ENCODE measurements at regions of chr1 and their contacts with region 1.

Region 1: DNA sequence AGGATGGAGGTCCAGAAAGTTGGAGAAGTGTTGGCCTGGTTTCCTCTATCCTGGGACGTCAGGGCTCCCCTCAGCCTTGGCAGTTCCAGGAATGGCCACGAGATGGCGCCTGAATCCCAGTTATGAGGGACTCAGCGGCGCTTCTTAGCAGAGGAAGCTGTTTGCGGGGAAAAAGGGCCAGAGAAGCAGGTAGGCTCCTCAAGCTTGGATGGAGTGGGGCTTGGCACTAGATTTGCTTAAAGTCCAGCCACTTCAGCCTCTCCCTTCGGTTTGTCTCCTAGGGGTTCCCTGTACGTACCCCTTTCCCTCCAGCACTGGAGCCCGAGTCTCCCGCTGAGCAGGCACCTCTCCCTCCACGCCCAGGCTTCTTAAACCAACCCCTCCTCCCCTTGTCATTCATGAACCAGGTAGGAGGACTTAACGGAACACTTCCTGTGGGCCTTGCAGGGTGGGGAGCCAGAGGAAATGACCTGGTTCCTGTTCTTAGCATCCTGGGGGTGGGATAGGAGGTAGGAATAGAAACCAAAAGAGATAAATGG is 32.0 kb upstream of the TENT5B start:
- DNase-seq: peak; percentile 94
- H3K4me3 ChIP-seq: no peak overlapping the region
- H3K27ac ChIP-seq: no peak overlapping the region
- H3K4me1 ChIP-seq: no peaks in the 10 kb centered on the region
- H3K27me3 ChIP-seq: no peaks in the 10 kb centered on the region
- CTCF ChIP-seq: peak; percentile 97

Region 2: GRCh38 chr1:26864610-26865527 is 179.8 kb before region 1 on chr1:
- intact Hi-C with region 1: no loop called
- DNase-seq: peak; percentile 97
- H3K4me3 ChIP-seq: peak overlapping the region; percentile 64
- H3K27ac ChIP-seq: peak overlapping the region; percentile 100
- H3K4me1 ChIP-seq: no peaks in the 10 kb centered on the region
- H3K27me3 ChIP-seq: no peaks in the 10 kb centered on the region
- CTCF ChIP-seq: no peak

Region 3: GRCh38 chr1:26986658-26987057 is 58.0 kb before region 1 on chr1:
- intact Hi-C with region 1: no loop called
- DNase-seq: no peak
- H3K4me3 ChIP-seq: no peak overlapping the region
- H3K27ac ChIP-seq: no peak overlapping the region
- H3K4me1 ChIP-seq: no peaks in the 10 kb centered on the region
- H3K27me3 ChIP-seq: peaks cover 3% of the 10 kb centered on the region
- CTCF ChIP-seq: no peak

Region 4: GRCh38 chr1:27097484-27097917 is 52.8 kb after region 1 on chr1:
- intact Hi-C with region 1: loop called (anchors 2 kb)
- DNase-seq: peak; percentile 84
- H3K4me3 ChIP-seq: no peak overlapping the region
- H3K27ac ChIP-seq: no peak overlapping the region
- H3K4me1 ChIP-seq: no peaks in the 10 kb centered on the region
- H3K27me3 ChIP-seq: no peaks in the 10 kb centered on the region
- CTCF ChIP-seq: peak; percentile 98

Region 5: DNA sequence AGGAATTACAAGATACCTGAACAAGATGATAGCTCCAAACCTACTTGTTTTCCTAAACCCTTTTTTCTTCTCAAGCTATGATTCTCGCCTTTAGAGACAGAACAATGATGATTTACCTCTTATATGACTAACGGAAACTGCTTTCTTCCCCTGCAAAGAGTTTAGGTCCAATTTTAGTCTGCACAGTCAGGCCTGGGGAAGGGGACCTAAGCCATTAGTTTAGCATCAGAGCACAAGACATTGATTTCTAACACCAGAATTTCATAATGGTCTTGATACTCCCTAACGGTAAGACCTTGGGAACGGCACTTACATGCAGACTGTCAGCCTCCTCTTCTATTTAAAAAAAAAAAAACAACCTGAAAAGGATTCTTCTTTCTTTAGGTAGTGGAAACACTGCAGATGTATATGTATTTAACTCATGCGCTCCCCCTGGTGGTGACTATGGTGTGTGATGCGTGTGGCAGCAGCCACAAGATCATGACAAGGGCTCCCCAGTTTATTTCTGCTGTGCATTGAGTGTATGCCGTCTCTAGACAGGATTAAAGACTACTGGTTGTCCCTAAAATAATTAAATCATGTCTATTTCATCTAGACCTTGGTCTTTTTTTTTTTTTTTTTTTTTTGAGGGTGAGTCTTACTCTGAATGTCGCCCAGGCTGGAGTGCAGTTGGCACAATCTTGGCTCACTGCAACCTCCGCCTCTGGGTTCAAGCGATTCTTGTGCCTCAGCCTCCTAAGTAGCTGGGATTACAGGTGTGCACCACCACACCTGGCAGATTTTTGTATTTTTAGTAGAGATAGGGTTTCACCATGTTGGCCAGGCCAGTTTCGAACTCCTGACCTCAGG is 240.0 kb after region 1 on chr1:
- intact Hi-C with region 1: loop called (anchors 10 kb)
- DNase-seq: peak; percentile 94
- H3K4me3 ChIP-seq: no peak overlapping the region
- H3K27ac ChIP-seq: no peak overlapping the region
- H3K4me1 ChIP-seq: no peaks in the 10 kb centered on the region
- H3K27me3 ChIP-seq: no peaks in the 10 kb centered on the region
- CTCF ChIP-seq: peak; percentile 75

Region 6: DNA sequence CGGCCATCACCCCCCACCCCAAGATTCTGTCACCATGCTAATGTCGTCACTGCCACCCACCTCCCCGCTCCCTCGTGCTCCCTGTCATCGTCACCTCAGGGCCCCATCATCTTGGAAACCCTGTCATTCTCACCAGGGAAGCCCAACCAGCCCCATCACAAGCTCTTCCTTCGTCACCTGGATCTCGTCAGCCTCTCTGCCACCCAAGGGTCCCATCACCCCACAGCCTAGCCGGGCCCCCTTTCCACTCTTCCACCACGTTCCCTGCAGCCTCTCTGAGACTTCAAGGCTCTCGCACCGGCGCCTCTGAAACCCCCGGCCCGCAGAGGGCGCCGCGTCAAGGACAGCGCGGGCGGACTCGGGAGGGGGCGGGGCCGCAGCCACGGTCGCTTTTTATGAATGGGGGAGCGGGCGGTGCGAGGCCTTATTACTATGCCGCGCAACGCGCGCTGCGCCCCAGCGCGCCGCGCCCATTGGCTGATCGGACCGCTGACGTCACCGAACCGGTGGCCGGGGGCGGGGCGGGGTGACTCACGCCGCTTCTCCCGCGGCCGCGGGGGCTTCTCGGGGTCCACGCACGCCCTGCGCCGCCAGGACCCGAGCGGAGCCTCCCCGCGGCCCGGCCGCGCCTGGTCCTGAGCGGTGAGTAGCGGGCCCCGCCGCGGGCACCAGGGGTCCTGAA is 347.6 kb after region 1 on chr1 and contains the start of gene GPR3:
- intact Hi-C with region 1: loop called (anchors 10 kb)
- DNase-seq: peak; percentile 93
- H3K4me3 ChIP-seq: peak within 1 kb of the TSS; percentile 58
- H3K27ac ChIP-seq: no peak within 1 kb of the TSS
- H3K4me1 ChIP-seq: peaks cover 5% of the 10 kb centered on the region
- H3K27me3 ChIP-seq: no peaks in the 10 kb centered on the region
- CTCF ChIP-seq: peak; percentile 27
- total RNA-seq, gene GPR3: 0.32 to 0.49 TPM

Region 7: GRCh38 chr1:27455139-27455811 is 410.6 kb after region 1 on chr1:
- intact Hi-C with region 1: no loop called
- DNase-seq: no peak
- H3K4me3 ChIP-seq: no peak overlapping the region
- H3K27ac ChIP-seq: no peak overlapping the region
- H3K4me1 ChIP-seq: no peaks in the 10 kb centered on the region
- H3K27me3 ChIP-seq: no peaks in the 10 kb centered on the region
- CTCF ChIP-seq: no peak